Activated CD8-positive, alpha-beta T cell treated with anti-CD3 and anti-CD28 coated beads for 36 hours (primary cell): ENCODE measurements at regions of chr3 and their contacts with region 1.

Region 1: GRCh38 chr3:189967254-189967865 is 153.3 kb downstream of the P3H2 start:
- DNase-seq: peak; percentile 14
- ATAC-seq: peak; percentile 60
- H3K4me3 Mint-ChIP-seq: no peak overlapping the region
- H3K27ac Mint-ChIP-seq: no peak overlapping the region
- H3K4me1 Mint-ChIP-seq: no peaks in the 10 kb centered on the region
- H3K27me3 Mint-ChIP-seq: peaks cover 8% of the 10 kb centered on the region
- CTCF ChIP-seq: peak; percentile 85

Region 2: GRCh38 chr3:189702066-189702646 is 265.2 kb before region 1 on chr3:
- CTCF ChIA-PET with region 1: no interaction called
- POLR2A ChIA-PET with region 1: no interaction called
- intact Hi-C with region 1: no loop called
- DNase-seq: no peak
- ATAC-seq: no peak
- H3K4me3 Mint-ChIP-seq: no peak overlapping the region
- H3K27ac Mint-ChIP-seq: no peak overlapping the region
- H3K4me1 Mint-ChIP-seq: no peaks in the 10 kb centered on the region
- H3K27me3 Mint-ChIP-seq: peaks cover 3% of the 10 kb centered on the region
- CTCF ChIP-seq: no peak

Region 3: DNA sequence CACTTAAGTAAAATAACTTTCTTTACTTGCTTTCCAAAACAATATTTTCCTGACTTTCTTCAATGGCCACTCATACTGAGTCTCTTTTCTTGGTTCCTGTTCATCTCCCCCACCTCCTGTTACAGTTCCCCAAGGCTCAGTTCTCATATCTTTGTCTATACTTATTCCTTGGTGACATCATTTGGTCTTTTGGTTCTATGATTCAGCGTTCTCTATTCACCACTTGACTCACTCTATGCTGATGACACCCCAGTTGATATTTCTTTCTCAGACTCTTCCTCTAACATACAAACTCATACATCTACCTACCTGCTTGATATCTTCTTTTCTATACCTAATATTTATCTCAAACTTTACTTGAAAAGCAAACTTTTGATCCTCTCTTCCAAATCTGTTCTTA is 238.4 kb after region 1 on chr3:
- CTCF ChIA-PET with region 1: interaction called, 24 read pairs
- POLR2A ChIA-PET with region 1: no interaction called
- intact Hi-C with region 1: loop called (anchors 2 kb)
- DNase-seq: no peak
- ATAC-seq: peak; percentile 79
- H3K4me3 Mint-ChIP-seq: no peak overlapping the region
- H3K27ac Mint-ChIP-seq: no peak overlapping the region
- H3K4me1 Mint-ChIP-seq: peaks cover 16% of the 10 kb centered on the region
- H3K27me3 Mint-ChIP-seq: peaks cover 23% of the 10 kb centered on the region
- CTCF ChIP-seq: no peak